Cardiac septum (tissue), 1 donor: ENCODE measurements at regions of chr2 and their contacts with region 1.

Region 1: GRCh38 chr2:96638144-96639121 is at the start of gene KANSL3:
- DNase-seq: peak; percentile 97
- total RNA-seq, gene KANSL3: 35.3 TPM

Region 2: GRCh38 chr2:96437512-96437911 is 200.9 kb before region 1 on chr2:
- intact Hi-C with region 1: no loop called
- DNase-seq: no peak

Region 3: GRCh38 chr2:96536445-96537065 is 101.9 kb before region 1 on chr2 and contains the start of gene ARID5A:
- intact Hi-C with region 1: loop called (anchors 2 kb)
- DNase-seq: peak; percentile 97
- total RNA-seq, gene ARID5A: 79.4 TPM

Region 4: GRCh38 chr2:96739633-96740428 is 101.4 kb after region 1 on chr2 and contains the start of gene LMAN2L:
- intact Hi-C with region 1: loop called (anchors 2 kb)
- DNase-seq: peak; percentile 97
- total RNA-seq, gene LMAN2L: 17.0 TPM

Region 5: GRCh38 chr2:96760036-96760985 is 121.9 kb after region 1 on chr2 and contains the start of gene CNNM4:
- intact Hi-C with region 1: loop called (anchors 1 kb)
- DNase-seq: peak; percentile 97
- total RNA-seq, gene CNNM4: 36.8 TPM

Region 6: DNA sequence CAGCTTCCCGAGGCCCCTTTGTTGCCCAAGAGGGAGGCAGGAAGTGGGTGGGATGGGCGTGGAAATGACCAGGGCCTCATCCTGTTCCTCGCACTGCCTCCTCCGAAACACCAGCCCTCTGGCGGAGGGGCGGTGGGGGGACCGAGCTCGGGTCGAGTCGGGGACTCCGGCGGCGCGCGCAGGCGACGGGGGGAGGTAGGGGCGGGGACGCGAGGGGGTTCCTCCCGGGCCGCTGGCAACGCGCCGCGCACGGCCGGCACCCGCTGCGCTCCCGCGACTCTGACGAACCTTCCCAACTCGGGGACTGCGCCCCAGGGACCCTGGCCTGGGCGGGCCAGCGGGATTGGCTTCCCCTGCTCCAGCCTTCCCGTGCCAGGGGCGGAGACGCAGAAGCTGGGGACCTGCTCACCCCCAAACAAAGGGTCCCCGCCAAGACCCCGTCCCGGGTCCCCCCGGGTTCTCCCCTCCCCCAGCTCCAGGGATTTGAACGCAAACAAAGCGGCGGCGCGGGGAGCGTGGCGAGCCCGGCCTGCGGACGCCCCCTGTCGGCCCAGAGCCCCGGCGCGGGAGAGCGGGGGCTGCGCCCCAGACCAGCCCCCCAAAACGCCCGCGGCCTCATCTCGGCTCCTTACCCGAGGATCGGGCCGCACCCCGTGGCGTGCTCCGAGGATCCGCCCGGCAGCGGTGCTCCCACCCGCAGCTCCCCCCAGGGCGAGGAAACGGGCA is 230.3 kb after region 1 on chr2:
- intact Hi-C with region 1: loop called (anchors 5 kb)
- DNase-seq: peak; percentile 90